Activated naive CD4-positive, alpha-beta T cell treated with anti-CD3 and anti-CD28 coated beads for 36 hours (primary cell): ENCODE measurements at regions of chr1 and their contacts with region 1.

Region 1: DNA sequence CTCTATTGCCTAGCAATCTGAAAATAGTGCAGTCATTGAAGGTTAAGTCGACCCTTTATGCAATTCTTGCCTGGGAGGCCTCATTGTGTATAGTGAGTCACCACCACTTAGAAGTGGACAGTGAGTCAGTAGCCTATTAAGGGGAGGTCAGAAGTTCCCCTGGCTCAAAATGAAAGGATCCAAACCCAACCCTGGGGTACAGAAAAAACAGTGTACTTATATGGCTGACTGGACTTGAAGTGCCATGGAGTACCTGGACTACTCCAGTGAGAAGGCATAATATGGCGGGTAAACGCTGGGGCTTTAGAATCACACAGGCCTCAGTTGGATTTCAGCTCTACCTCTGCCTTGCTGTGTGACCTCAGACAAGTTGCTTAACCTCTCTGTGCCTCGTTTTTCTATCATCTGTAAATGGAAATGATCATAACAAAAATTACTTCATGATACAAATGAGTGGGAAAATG is 2.2 kb upstream of the BCL9 start:
- DNase-seq: peak; percentile 51
- H3K4me3 Mint-ChIP-seq: no peak overlapping the region
- H3K27ac Mint-ChIP-seq: no peak overlapping the region
- H3K4me1 Mint-ChIP-seq: peaks cover 22% of the 10 kb centered on the region
- H3K27me3 Mint-ChIP-seq: no peaks in the 10 kb centered on the region

Region 2: GRCh38 chr1:147341246-147341645 is 197.9 kb before region 1 on chr1:
- CTCF ChIA-PET with region 1: no interaction called
- intact Hi-C with region 1: no loop called
- DNase-seq: no peak
- H3K4me3 Mint-ChIP-seq: no peak overlapping the region
- H3K27ac Mint-ChIP-seq: no peak overlapping the region
- H3K4me1 Mint-ChIP-seq: no peaks in the 10 kb centered on the region
- H3K27me3 Mint-ChIP-seq: peaks cover 45% of the 10 kb centered on the region

Region 3: DNA sequence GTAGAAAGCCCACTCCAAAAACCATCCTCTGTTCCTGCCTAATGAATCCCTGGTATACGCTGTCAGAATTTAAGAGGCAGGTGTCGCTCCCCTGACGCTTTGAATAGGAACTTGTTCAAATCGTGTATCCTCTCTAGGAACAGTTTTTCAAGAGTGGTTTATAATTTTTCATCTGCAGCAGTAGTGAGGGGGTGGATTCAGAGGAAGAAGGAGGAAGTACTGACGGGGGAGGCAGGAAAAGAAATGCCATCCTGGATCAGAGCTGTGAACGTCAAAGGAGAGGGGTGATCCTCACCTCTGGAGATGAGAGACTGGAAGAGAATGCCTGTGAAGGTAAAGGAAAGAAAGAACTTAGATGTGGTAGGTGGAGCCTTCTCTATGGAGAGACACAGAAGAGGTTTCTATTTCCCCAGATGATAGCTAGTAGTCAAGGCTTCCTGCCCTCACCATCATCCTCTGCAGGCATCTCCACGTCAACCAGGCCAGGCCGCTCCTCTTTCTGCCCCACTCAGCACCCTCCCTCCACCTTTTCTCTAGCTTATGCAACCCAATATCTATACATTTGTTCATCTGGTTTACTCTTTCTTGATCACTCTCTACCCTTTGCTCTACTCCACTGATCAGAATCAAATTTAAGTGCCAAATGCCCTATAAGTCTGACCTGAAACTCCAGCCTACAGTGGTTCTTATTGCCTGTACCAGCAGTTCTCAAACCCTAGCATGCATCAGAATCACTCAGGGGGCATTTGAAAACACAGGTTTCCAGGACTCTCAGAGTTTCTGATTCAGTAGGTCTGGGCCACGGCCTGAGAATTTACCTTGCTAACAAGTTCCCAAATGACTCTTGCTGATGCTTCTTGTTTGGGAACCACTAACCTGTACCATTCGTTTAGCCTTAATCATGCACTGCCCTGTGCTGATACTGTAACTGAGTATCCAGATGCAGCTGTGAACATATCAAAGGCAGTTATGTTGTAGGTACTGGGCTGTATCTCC is 10.9 kb before region 1 on chr1:
- CTCF ChIA-PET with region 1: interaction called, 18 read pairs
- intact Hi-C with region 1: no loop called
- DNase-seq: peak; percentile 50
- H3K4me3 Mint-ChIP-seq: no peak overlapping the region
- H3K27ac Mint-ChIP-seq: no peak overlapping the region
- H3K4me1 Mint-ChIP-seq: no peaks in the 10 kb centered on the region
- H3K27me3 Mint-ChIP-seq: no peaks in the 10 kb centered on the region

Region 4: GRCh38 chr1:147579532-147579931 is 40.4 kb after region 1 on chr1:
- CTCF ChIA-PET with region 1: interaction called, 6 read pairs
- intact Hi-C with region 1: loop called (anchors 1 kb)
- DNase-seq: peak; percentile 16
- H3K4me3 Mint-ChIP-seq: peak overlapping the region; percentile 56
- H3K27ac Mint-ChIP-seq: peak overlapping the region; percentile 69
- H3K4me1 Mint-ChIP-seq: peaks cover 34% of the 10 kb centered on the region
- H3K27me3 Mint-ChIP-seq: peaks cover 14% of the 10 kb centered on the region

Region 5: GRCh38 chr1:147618077-147618569 is 79.0 kb after region 1 on chr1:
- CTCF ChIA-PET with region 1: interaction called, 3 read pairs
- intact Hi-C with region 1: loop called (anchors 1 kb)
- DNase-seq: peak; percentile 61
- H3K4me3 Mint-ChIP-seq: no peak overlapping the region
- H3K27ac Mint-ChIP-seq: peak overlapping the region; percentile 78
- H3K4me1 Mint-ChIP-seq: peaks cover 19% of the 10 kb centered on the region
- H3K27me3 Mint-ChIP-seq: no peaks in the 10 kb centered on the region